ENCODE measurements at regions of chr14 and their contacts with region 1.

Region 1: GRCh38 chr14:103104654-103105452 is 10.3 kb downstream of the EXOC3L4 start:
- DNase-seq: peak in 41 of 42 donors; percentile 54 to 89 (median 78)

Region 2: DNA sequence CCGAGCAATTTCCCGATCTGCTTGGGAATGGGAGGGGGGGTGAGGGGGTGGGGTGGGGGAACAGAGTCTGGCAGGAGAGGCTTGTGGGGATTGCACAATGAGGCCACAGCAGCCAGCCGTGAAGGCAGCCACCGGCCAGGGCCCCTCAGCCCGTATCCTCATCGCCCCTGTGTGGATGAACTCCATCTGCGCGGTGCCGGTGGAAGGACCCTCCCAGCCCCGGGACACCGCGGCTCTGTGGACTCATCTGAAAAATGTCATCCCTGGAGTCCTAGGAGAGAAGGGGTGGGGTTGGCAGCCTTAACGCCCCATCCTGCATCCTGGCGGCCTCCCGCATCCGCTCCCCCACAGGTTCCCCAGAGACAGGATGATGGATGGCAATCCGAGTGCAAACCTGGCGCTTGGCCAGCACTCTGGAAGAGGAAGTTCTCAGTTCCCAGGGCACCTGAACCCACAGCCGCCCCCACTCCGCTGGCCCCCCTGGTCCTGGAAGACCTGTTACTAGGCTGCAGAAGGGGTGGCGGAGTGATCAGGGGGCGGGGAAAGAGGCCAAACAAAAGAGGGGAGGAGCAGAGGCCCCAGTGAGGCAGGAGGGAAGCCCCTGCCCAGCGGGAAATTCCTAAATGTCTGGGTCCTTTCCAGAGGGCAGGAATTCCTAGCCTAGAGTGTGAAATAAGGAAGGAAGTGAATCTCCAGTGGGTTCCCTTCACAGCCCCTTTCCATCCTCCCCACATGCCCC is 17.2 kb after region 1 on chr14:
- intact Hi-C with region 1: no loop called
- DNase-seq: peak in 9 of 42 donors; percentile 23 to 58 (median 36)

Region 3: GRCh38 chr14:103185051-103185992 is 80.5 kb after region 1 on chr14:
- intact Hi-C with region 1: loop called (anchors 10 kb)
- DNase-seq: no peak

Region 4: DNA sequence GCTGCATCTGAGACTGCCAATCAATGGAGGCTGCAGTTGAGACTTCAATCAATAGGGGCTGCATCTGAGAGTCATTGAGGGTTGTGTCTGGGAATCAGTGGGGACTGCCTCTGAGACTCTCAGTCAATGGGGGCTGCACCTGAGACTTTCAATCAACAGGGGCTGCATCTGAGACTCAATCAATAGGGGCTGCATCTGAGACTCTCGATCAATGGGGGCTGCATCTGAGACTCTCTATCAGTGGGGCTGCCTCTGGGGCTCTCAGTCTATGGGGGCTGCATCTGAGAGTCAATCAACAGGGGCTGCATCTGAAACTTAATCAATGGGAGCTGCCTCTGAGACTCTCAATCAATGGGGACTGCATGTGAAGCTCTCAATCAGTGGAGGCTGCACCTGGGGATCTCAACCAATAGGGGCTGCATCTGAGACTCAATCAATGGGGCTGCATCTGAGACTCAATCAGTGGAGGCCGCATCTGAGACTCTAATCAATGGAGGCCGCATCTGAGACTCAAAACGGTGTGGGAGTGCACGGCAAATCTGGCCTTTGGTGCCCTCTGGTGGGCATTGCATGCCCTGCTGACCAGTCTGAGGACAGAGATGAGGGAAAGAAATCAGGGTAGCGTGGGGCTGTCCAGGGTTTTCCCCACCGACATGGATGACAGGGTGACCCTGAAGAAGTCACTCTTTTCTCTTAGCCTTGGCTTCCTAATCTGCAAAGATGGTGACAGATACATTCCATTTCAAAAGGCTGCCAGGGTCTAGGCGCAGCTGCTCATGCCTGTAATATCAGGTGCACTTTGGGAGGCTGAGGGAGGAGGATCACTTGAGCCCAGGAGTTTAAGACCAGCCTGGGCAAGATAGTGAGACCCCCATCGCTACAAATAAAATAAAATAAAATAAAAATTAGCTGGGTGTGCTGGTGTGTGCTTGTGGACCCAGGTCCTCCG is 187.8 kb after region 1 on chr14:
- intact Hi-C with region 1: loop called (anchors 2 kb)
- DNase-seq: peak; percentile 44 to 93 (median 84)